Naive thymus-derived CD4-positive, alpha-beta T cell (primary cell): ENCODE measurements at regions of chr3 and their contacts with region 1.

Region 1: GRCh38 chr3:45037734-45038455 is 11.8 kb downstream of the CLEC3B start:
- DNase-seq: peak; percentile 71 to 94 (median 92)
- ATAC-seq: peak; percentile 98
- H3K4me3 ChIP-seq: no peak overlapping the region
- H3K4me3 Mint-ChIP-seq: peak overlapping the region in 8 of 10 donors; percentile 33 to 84 (median 74)
- H3K27ac ChIP-seq: no peak overlapping the region
- H3K27ac Mint-ChIP-seq: no peak overlapping the region
- H3K4me1 ChIP-seq: peaks cover 9 to 29% of the 10 kb centered on the region in 2 donors
- H3K4me1 Mint-ChIP-seq: peaks cover 25 to 70% (median 58%) of the 10 kb centered on the region in 7 donors
- H3K27me3 ChIP-seq: no peaks in the 10 kb centered on the region
- H3K27me3 Mint-ChIP-seq: peaks cover 0 to 32% (median 8%) of the 10 kb centered on the region in 5 donors

Region 2: GRCh38 chr3:44077246-44077645 is 960.6 kb before region 1 on chr3:
- CTCF ChIA-PET with region 1: no interaction called
- POLR2A ChIA-PET with region 1: no interaction called
- intact Hi-C with region 1: no loop called
- DNase-seq: no peak
- ATAC-seq: no peak
- H3K4me3 ChIP-seq: no peak overlapping the region
- H3K4me3 Mint-ChIP-seq: no peak overlapping the region
- H3K27ac ChIP-seq: no peak overlapping the region
- H3K27ac Mint-ChIP-seq: no peak overlapping the region
- H3K4me1 ChIP-seq: no peaks in the 10 kb centered on the region
- H3K4me1 Mint-ChIP-seq: no peaks in the 10 kb centered on the region
- H3K27me3 ChIP-seq: no peaks in the 10 kb centered on the region
- H3K27me3 Mint-ChIP-seq: peaks cover 0 to 10% (median 0%) of the 10 kb centered on the region in 5 donors

Region 3: DNA sequence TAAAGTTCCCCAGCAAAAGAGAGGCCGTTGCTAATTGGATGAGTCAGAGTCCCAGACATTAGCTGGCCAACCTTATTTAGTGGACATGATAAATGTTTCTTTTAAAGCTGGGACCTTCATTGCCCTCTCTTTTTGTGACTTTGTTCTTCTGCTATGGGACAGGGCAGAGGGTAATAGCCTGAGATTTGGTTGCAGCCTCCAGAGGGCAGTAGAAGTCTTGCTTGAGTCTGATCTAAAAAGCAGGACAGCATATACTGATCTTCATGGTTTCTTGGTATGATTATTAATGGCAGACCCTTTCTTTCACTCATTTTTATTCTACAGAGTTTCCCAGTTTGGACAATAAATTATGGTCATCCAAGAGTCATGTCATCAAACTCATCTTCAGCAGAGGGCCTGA is 508.0 kb before region 1 on chr3:
- CTCF ChIA-PET with region 1: no interaction called
- POLR2A ChIA-PET with region 1: no interaction called
- intact Hi-C with region 1: loop called (anchors 1 to 2 kb)
- DNase-seq: peak in 1 of 9 donors; percentile 15
- ATAC-seq: no peak
- H3K4me3 ChIP-seq: no peak overlapping the region
- H3K4me3 Mint-ChIP-seq: no peak overlapping the region
- H3K27ac ChIP-seq: no peak overlapping the region
- H3K27ac Mint-ChIP-seq: no peak overlapping the region
- H3K4me1 ChIP-seq: no peaks in the 10 kb centered on the region
- H3K4me1 Mint-ChIP-seq: peaks cover 0 to 2% (median 0%) of the 10 kb centered on the region in 7 donors
- H3K27me3 ChIP-seq: no peaks in the 10 kb centered on the region
- H3K27me3 Mint-ChIP-seq: peaks cover 9 to 30% (median 15%) of the 10 kb centered on the region in 5 donors

Region 4: DNA sequence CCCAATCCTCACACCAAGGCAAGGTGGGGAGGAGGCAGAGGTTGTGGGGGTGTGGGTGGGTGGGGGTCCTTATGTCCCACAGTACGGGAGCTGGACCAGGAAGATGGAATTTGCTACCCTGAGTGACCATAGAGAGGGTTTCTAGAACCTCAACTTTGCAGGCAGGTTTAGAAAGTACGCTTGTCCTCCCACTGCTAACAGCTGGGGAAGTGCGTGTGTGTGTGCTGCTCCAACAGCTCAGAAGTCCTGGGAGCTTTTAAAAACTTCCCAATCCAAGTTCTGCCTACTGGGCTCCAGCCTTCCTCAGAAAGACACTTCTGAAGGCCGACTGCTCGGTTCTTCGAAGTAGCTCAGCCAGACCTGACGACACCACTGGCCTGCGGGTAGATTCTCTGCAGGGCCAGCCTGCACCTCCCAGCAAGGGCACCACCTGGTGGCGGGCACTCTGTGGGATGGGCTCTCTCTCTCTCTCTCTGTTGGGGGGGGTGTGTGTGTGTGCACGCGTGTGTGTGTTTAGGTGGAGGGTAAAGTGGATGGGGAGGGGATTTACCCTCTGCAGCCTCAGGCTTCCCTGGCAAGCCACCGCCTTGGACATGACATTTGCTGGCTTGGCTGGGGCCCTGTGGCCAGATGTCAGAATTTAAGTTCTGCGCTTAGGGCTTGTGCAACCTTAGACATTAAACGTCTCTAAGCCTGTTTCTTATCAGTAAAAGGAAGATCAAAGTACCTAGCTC is 172.6 kb after region 1 on chr3:
- CTCF ChIA-PET with region 1: interaction called, 379 read pairs
- POLR2A ChIA-PET with region 1: interaction called, 17 read pairs
- intact Hi-C with region 1: loop called (anchors 1 kb)
- DNase-seq: peak; percentile 61 to 81 (median 77)
- ATAC-seq: peak; percentile 99
- H3K4me3 ChIP-seq: no peak overlapping the region
- H3K4me3 Mint-ChIP-seq: peak overlapping the region in 6 of 10 donors; percentile 23 to 66 (median 48)
- H3K27ac ChIP-seq: no peak overlapping the region
- H3K27ac Mint-ChIP-seq: peak overlapping the region in 3 of 9 donors; percentile 5 to 76 (median 31)
- H3K4me1 ChIP-seq: peaks cover 3 to 9% of the 10 kb centered on the region in 2 donors
- H3K4me1 Mint-ChIP-seq: peaks cover 11 to 26% (median 18%) of the 10 kb centered on the region in 7 donors
- H3K27me3 ChIP-seq: no peaks in the 10 kb centered on the region
- H3K27me3 Mint-ChIP-seq: peaks cover 11 to 32% (median 15%) of the 10 kb centered on the region in 5 donors

Region 5: DNA sequence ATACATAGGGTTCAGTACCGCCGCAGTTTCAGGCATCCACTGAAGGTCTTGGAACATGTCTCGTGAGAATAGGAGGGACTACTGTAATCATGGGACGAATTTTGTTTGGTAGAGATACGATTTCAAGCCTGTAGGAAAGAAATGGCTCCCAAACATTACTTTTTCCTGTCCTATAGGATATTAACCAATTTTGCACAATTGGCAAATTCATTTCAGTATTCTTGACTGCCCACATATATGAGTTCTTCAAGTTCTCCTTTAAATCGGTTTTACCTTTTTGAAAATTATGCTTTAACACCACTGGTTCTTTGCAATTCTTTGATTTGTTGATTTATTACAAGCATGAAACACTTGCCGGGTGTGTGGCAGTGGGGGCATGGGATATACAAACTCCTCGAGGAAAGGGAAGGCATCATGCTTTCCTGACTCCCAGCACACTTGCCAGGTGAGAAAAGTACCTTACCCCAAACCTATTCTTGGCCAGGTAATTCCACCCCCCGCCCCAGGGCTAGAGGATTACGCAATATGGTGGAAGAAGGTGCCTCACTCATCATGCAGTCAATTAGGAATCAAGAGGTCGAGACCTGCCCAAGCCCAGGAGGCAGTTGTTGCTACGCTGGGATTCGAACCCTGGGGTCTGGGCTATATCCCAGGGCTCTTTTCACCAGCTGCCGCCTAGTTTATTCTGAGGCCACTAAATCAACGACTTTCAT is 349.9 kb after region 1 on chr3:
- CTCF ChIA-PET with region 1: no interaction called
- POLR2A ChIA-PET with region 1: no interaction called
- intact Hi-C with region 1: loop called in 1 of 2 experiments (anchors 1 kb)
- DNase-seq: no peak
- ATAC-seq: no peak
- H3K4me3 ChIP-seq: peak overlapping the region; percentile 95
- H3K4me3 Mint-ChIP-seq: peak overlapping the region; percentile 94 to 99 (median 97)
- H3K27ac ChIP-seq: peak overlapping the region; percentile 77
- H3K27ac Mint-ChIP-seq: peak overlapping the region; percentile 38 to 97 (median 91)
- H3K4me1 ChIP-seq: peaks cover 4 to 8% of the 10 kb centered on the region in 2 donors
- H3K4me1 Mint-ChIP-seq: peaks cover 6 to 27% (median 18%) of the 10 kb centered on the region in 7 donors
- H3K27me3 ChIP-seq: no peaks in the 10 kb centered on the region
- H3K27me3 Mint-ChIP-seq: peaks cover 0 to 35% (median 4%) of the 10 kb centered on the region in 5 donors

Region 6: GRCh38 chr3:45593708-45594609 is 556.1 kb after region 1 on chr3:
- CTCF ChIA-PET with region 1: no interaction called
- POLR2A ChIA-PET with region 1: interaction called, 3 read pairs
- intact Hi-C with region 1: loop called in 1 of 2 experiments (anchors 1 kb)
- DNase-seq: peak; percentile 46 to 83 (median 70)
- ATAC-seq: peak; percentile 83
- H3K4me3 ChIP-seq: peak overlapping the region; percentile 71
- H3K4me3 Mint-ChIP-seq: peak overlapping the region; percentile 84 to 99 (median 90)
- H3K27ac ChIP-seq: peak overlapping the region; percentile 72
- H3K27ac Mint-ChIP-seq: peak overlapping the region; percentile 85 to 96 (median 91)
- H3K4me1 ChIP-seq: peaks cover 44 to 58% of the 10 kb centered on the region in 2 donors
- H3K4me1 Mint-ChIP-seq: peaks cover 48 to 61% (median 55%) of the 10 kb centered on the region in 7 donors
- H3K27me3 ChIP-seq: no peaks in the 10 kb centered on the region
- H3K27me3 Mint-ChIP-seq: peaks cover 0 to 3% (median 0%) of the 10 kb centered on the region in 5 donors

Region 7: GRCh38 chr3:45929042-45929679 is 891.3 kb after region 1 on chr3:
- CTCF ChIA-PET with region 1: no interaction called
- POLR2A ChIA-PET with region 1: no interaction called
- intact Hi-C with region 1: loop called (anchors 1 to 5 kb)
- DNase-seq: peak; percentile 49 to 79 (median 64)
- ATAC-seq: peak; percentile 88
- H3K4me3 ChIP-seq: no peak overlapping the region
- H3K4me3 Mint-ChIP-seq: no peak overlapping the region
- H3K27ac ChIP-seq: no peak overlapping the region
- H3K27ac Mint-ChIP-seq: peak overlapping the region in 2 of 9 donors; percentile 54 to 73
- H3K4me1 ChIP-seq: no peaks in the 10 kb centered on the region
- H3K4me1 Mint-ChIP-seq: peaks cover 4 to 9% (median 5%) of the 10 kb centered on the region in 7 donors
- H3K27me3 ChIP-seq: no peaks in the 10 kb centered on the region
- H3K27me3 Mint-ChIP-seq: no peaks in the 10 kb centered on the region